ENCODE measurements at regions of chr9 and their contacts with region 1.

Region 1: DNA sequence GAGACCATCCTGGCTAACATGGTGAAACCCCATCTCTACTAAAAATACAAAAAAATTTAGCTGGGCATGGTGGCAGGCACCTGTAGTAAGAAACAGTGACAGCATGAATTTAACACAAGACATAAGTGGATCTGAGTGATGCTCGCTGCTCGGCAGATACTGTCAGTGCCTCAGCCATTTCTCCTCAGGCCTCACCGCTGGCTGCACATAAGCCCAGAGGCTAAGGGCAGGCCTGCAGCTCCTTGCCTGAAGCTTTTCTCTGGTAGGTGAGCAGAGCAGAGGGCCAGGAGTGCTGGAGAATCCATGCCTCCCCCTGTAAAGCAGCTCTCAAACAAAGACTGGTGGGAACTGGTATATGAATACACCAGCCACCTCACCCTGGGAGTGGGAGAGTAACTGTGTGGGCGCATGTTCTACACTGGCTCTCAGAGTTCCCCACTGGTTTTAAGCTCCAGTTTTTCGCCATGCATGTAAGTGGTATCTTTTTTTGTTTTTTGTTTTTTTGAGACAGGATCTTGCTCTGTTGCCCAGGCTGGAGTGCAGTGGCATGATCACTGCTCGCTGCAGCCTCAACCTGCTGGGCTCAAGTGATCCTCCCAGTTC is 10.3 kb upstream of the CD72 start:
- DNase-seq: no peak
- CTCF ChIP-seq: no peak

Region 2: GRCh38 chr9:35553670-35554543 is 74.6 kb before region 1 on chr9:
- CTCF ChIA-PET with region 1: no interaction called
- POLR2A ChIA-PET with region 1: no interaction called
- DNase-seq: peak; percentile 65
- CTCF ChIP-seq: peak; percentile 64

Region 3: GRCh38 chr9:35611230-35611797 is 17.2 kb before region 1 on chr9:
- CTCF ChIA-PET with region 1: interaction called, 53 read pairs
- POLR2A ChIA-PET with region 1: interaction called, 3 read pairs
- DNase-seq: peak; percentile 46
- CTCF ChIP-seq: peak; percentile 70

Region 4: GRCh38 chr9:35616681-35617459 is 11.6 kb before region 1 on chr9:
- CTCF ChIA-PET with region 1: interaction called, 53 read pairs
- POLR2A ChIA-PET with region 1: no interaction called
- DNase-seq: peak; percentile 83
- CTCF ChIP-seq: peak; percentile 36

Region 5: GRCh38 chr9:35646533-35647265 is 18.2 kb after region 1 on chr9:
- CTCF ChIA-PET with region 1: interaction called, 36 read pairs
- POLR2A ChIA-PET with region 1: interaction called, 5 read pairs
- DNase-seq: peak; percentile 94
- CTCF ChIP-seq: peak; percentile 98

Region 6: DNA sequence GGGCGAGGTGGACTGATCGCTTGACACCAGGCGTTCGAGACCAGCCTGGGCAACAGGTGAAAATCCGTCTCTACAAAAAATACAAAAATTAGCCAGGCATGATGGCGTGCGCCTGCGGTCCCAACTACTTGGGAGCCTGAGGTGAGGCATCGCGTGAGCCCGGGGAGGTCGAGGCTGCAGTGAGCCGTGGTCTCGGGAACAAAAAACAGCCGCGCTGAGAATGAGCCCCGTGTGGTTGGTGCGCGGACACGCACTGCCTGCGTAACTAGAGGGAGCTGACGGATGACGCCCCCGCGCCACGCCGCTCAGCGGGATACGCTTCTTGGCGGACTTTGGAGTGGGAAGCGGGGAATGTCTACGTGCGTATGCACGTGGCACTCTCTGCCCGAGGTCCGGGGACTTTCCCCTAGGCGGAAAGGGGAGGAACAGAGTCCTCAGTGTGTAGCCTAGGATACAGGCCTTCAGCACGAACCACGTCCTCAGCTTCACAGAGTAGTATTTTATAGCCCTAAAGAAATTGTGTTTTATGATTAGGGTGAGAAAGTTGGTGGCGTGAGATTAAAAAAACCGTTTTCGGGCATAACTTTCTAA is 29.2 kb after region 1 on chr9 and contains the start of gene RMRP:
- CTCF ChIA-PET with region 1: interaction called, 17 read pairs
- POLR2A ChIA-PET with region 1: no interaction called
- DNase-seq: peak; percentile 92
- CTCF ChIP-seq: no peak